Dorsolateral prefrontal cortex (tissue), 120 donors: ENCODE measurements at regions of chr3 and their contacts with region 1.

Region 1: GRCh38 chr3:114362815-114363214 is 69.0 kb downstream of the TIGIT start:
- DNase-seq: no peak
- H3K4me3 ChIP-seq: no peak overlapping the region
- H3K27ac ChIP-seq: peak overlapping the region in 41 of 59 donors; percentile 3 to 82 (median 55)
- H3K27me3 ChIP-seq: no peaks in the 10 kb centered on the region
- CTCF ChIP-seq: peak; percentile 44 to 86 (median 71)

Region 2: DNA sequence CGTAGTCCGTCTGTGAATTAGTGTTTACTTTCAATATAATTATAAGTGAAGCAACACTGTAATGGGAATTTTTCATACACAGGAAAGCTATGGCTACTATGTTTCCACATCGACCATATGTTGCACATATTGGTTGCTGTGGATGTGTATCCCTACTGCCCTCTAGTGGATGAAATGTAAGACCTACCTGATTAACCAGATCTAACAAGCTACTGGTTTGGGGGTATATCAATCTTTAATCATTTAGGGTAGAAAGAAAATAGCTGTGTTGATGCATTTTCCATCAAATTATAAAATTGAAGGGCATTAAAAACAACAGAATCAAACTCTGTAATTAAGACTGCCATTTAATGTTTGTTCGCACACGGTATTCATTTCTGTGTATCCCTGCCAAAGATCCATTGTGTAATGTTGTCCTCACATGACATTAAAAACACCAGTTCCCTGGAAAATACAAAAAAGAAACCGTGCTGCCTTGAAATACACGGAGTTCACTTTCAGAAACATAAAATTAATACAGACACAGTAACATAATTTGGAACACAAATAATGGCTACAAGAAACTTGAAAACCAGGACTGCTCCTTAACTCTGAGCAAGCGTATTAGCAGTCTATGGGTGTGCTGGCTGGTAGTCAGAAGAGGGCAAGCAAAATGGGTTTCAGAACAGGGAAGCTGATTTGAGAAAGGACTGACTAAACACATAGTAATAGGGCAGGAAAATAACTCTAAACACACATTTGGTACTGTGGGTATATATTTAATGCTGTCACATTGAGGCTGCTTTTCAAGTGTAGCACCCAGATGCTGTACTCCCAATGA is 56.1 kb after region 1 on chr3:
- intact Hi-C with region 1: loop called in 1 of 2 experiments (anchors 5 kb)
- DNase-seq: no peak
- H3K4me3 ChIP-seq: peak overlapping the region in 34 of 59 donors; percentile 1 to 46 (median 16)
- H3K27ac ChIP-seq: peak overlapping the region in 54 of 59 donors; percentile 0 to 80 (median 55)
- H3K27me3 ChIP-seq: no peaks in the 10 kb centered on the region
- CTCF ChIP-seq: peak; percentile 74 to 98 (median 90)

Region 3: DNA sequence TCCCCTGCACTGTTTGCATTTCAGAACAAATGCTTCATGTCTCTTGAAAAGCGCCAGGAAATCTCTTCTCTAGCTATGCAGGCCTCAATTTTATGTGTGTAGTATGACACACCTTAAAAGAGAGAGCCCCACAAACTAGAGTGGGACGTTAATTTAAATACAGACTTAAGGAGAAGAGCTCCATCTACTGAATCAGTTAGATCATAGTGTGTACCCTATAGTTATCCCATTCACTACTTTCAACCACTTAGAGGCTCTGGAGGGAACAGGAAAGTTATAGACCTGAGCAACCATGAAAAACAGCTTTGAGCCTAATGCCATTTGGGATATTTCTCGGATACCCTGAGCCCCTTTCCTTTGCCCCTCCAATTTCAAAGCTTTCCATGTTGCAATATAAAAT is 84.7 kb after region 1 on chr3:
- intact Hi-C with region 1: loop called in 1 of 2 experiments (anchors 5 kb)
- DNase-seq: no peak
- H3K4me3 ChIP-seq: peak overlapping the region in 41 of 59 donors; percentile 0 to 76 (median 26)
- H3K27ac ChIP-seq: peak overlapping the region; percentile 53 to 99 (median 96)
- H3K27me3 ChIP-seq: no peaks in the 10 kb centered on the region
- CTCF ChIP-seq: peak in 38 of 56 donors; percentile 12 to 59 (median 38)

Region 4: GRCh38 chr3:114519415-114519814 is 156.6 kb after region 1 on chr3:
- intact Hi-C with region 1: no loop called
- DNase-seq: no peak
- H3K4me3 ChIP-seq: no peak overlapping the region
- H3K27ac ChIP-seq: no peak overlapping the region
- H3K27me3 ChIP-seq: no peaks in the 10 kb centered on the region
- CTCF ChIP-seq: no peak

Region 5: GRCh38 chr3:114597013-114597412 is 234.2 kb after region 1 on chr3:
- intact Hi-C with region 1: no loop called
- DNase-seq: no peak
- H3K4me3 ChIP-seq: no peak overlapping the region
- H3K27ac ChIP-seq: no peak overlapping the region
- H3K27me3 ChIP-seq: no peaks in the 10 kb centered on the region
- CTCF ChIP-seq: peak in 17 of 56 donors; percentile 7 to 35 (median 18)

Region 6: DNA sequence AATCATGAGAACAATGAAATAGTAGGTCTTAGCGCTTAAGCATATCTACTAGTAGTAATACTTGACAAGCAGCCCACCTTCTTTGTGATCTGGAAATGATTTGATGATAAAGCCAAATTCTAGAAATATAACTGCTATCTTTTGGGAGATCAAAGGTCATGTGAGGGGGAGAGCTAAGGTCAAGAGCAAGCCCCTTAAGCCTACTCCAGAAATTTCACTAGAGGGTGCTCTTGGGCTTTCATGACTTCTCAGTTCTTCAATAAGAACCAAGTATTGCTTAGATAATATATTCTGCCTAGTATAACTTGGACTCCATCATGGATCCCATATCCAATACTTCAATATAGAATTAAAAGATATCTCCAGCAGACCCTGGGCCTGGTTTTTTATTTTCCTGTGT is 464.7 kb after region 1 on chr3:
- intact Hi-C with region 1: loop called in 1 of 2 experiments (anchors 10 kb)
- DNase-seq: no peak
- H3K4me3 ChIP-seq: no peak overlapping the region
- H3K27ac ChIP-seq: peak overlapping the region in 10 of 59 donors; percentile 2 to 47 (median 24)
- H3K27me3 ChIP-seq: no peaks in the 10 kb centered on the region
- CTCF ChIP-seq: peak; percentile 50 to 87 (median 71)

Region 7: DNA sequence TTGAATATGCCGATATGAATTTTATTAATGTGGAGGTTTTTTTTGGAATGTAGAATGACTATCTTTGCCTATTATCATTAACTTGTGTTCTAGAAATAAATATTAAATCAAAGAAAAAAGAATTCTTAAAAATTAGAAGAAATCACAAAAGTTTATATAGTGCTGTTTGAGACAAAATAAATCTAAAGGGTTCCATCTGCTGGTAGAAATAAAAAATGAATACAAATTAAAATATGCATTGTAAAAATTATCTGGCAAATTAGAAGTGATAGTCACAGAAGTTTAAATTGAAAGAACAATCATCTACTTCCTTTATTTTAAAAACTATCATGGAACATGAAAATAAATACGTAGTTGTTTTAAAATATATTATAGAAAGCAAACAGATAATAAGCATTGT is 807.0 kb after region 1 on chr3:
- intact Hi-C with region 1: loop called in 1 of 2 experiments (anchors 10 kb)
- DNase-seq: no peak
- H3K4me3 ChIP-seq: no peak overlapping the region
- H3K27ac ChIP-seq: no peak overlapping the region
- H3K27me3 ChIP-seq: no peaks in the 10 kb centered on the region
- CTCF ChIP-seq: peak; percentile 29 to 83 (median 59)